CD4-positive, alpha-beta T cell (primary cell): ENCODE measurements at regions of chr9 and their contacts with region 1.

Region 1: DNA sequence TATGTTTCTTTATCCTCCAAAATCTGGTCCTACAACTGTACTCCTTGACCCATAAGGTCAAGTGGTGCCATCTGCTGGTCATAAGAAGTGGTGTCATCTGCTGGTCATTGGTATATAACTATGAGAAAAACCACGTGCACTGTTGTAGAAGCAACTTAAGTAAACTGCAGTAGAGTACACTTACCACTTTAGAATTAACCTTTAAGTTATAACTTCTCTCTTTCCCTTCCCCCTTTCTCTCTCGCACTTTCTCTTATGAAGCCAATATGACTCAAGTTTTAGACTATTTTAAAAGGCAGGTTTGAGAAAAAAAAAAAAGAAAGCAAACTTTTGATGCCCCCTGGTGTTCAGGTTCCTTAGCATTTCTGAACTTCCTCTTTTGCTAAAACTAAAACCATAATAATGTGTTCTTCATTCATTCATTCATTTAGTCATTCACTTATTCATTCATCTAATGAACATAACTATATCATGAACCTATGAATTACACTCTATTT is 12.8 kb upstream of the MTAP start:
- DNase-seq: peak in 11 of 14 experiments; percentile 17 to 88 (median 44)
- ATAC-seq: peak; percentile 97
- H3K4me3 ChIP-seq: peak overlapping the region; percentile 29
- H3K4me3 Mint-ChIP-seq: peak overlapping the region; percentile 59
- H3K27ac ChIP-seq: no peak overlapping the region
- H3K27ac Mint-ChIP-seq: no peak overlapping the region
- H3K4me1 ChIP-seq: no peaks in the 10 kb centered on the region
- H3K4me1 Mint-ChIP-seq: no peaks in the 10 kb centered on the region
- H3K27me3 ChIP-seq: peaks cover 0 to 12% of the 10 kb centered on the region in 2 experiments
- H3K27me3 Mint-ChIP-seq: peaks cover 4% of the 10 kb centered on the region
- CTCF ChIP-seq: peak; percentile 99

Region 2: DNA sequence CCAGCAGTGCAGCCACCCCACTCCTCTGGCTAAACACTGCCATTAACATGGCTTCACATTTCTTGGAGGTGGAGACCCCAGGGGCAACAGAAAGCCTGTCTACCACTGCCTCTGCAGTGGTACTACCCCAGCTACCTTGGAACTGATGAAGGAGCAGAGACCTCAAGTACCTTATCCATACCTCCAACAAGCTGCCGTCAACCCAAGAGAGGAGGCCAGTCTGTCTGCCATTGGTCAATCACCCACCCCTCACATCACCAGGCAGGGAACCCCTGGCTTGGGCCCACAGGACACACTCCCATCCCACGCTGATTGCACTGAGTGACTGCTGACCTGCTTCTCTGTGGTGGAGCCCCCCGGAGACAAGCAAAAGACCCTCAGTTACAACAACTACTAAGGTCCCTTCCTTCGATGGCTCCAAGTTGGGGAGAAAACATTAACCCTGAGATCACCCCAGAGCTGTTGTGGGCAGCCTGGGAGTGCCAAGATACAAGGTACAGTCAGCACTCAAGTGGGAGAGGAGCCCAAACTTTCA is 555.4 kb before region 1 on chr9:
- CTCF ChIA-PET with region 1: no interaction called
- POLR2A ChIA-PET with region 1: no interaction called
- intact Hi-C with region 1: loop called (anchors 1 to 5 kb)
- DNase-seq: no peak
- ATAC-seq: no peak
- H3K4me3 ChIP-seq: no peak overlapping the region
- H3K4me3 Mint-ChIP-seq: no peak overlapping the region
- H3K27ac ChIP-seq: no peak overlapping the region
- H3K27ac Mint-ChIP-seq: no peak overlapping the region
- H3K4me1 ChIP-seq: no peaks in the 10 kb centered on the region
- H3K4me1 Mint-ChIP-seq: peaks cover 20% of the 10 kb centered on the region
- H3K27me3 ChIP-seq: no peaks in the 10 kb centered on the region
- H3K27me3 Mint-ChIP-seq: no peaks in the 10 kb centered on the region
- CTCF ChIP-seq: no peak

Region 3: DNA sequence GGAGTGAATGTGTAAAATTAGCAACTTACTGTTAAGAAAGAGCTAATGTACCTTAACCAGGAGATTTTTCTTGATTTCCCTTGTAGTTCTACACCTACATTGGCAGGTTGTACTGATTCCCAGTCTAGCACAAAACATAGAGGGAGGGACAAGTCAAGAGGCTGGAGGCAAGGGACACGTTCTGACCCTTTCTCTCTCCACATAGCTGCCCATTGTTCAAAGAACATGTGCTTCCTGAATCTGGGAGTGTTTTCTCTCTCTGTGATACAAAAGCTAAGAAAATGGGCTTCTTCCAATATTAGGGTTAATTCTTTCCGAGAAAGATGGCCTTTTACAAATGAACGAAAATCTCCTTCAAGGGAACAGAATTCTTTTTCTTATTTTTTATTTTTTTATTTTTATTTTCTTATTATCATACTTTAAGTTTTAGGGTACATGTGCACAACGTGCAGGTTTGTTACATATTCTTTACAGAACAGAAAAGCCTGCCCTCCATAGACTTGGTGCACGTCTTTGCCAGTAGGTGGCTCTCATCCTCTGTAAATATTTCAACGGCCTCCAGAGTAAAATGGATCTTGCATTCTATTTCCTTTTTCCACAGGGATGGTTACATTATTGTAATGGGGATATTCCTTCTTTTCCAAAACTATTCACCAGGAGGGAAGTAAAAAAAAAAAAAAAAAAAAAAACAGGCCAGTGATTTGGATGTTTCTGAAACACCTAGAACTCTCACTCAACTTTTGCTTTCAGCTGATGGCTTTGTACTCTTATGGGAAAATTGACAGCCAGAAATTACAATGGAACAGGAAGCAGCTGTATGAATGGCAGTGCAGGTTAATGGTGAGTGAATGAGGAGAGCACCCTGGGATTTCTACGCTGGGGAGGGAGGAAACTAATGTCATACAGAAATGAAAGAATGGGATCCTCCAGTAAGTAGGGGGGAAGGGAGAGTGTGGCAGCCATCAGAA is 471.3 kb before region 1 on chr9:
- CTCF ChIA-PET with region 1: no interaction called
- POLR2A ChIA-PET with region 1: no interaction called
- intact Hi-C with region 1: loop called (anchors 2 to 5 kb)
- DNase-seq: peak in 10 of 14 experiments; percentile 3 to 66 (median 14)
- ATAC-seq: peak; percentile 78
- H3K4me3 ChIP-seq: no peak overlapping the region
- H3K4me3 Mint-ChIP-seq: no peak overlapping the region
- H3K27ac ChIP-seq: no peak overlapping the region
- H3K27ac Mint-ChIP-seq: no peak overlapping the region
- H3K4me1 ChIP-seq: no peaks in the 10 kb centered on the region
- H3K4me1 Mint-ChIP-seq: peaks cover 10% of the 10 kb centered on the region
- H3K27me3 ChIP-seq: no peaks in the 10 kb centered on the region
- H3K27me3 Mint-ChIP-seq: no peaks in the 10 kb centered on the region
- CTCF ChIP-seq: peak; percentile 75

Region 4: GRCh38 chr9:21465859-21466518 is 323.6 kb before region 1 on chr9:
- CTCF ChIA-PET with region 1: no interaction called
- POLR2A ChIA-PET with region 1: interaction called, 8 read pairs
- intact Hi-C with region 1: loop called (anchors 1 kb)
- DNase-seq: peak in 3 of 14 experiments; percentile 70 to 75 (median 74)
- ATAC-seq: peak; percentile 82
- H3K4me3 ChIP-seq: no peak overlapping the region
- H3K4me3 Mint-ChIP-seq: no peak overlapping the region
- H3K27ac ChIP-seq: no peak overlapping the region
- H3K27ac Mint-ChIP-seq: no peak overlapping the region
- H3K4me1 ChIP-seq: no peaks in the 10 kb centered on the region
- H3K4me1 Mint-ChIP-seq: no peaks in the 10 kb centered on the region
- H3K27me3 ChIP-seq: no peaks in the 10 kb centered on the region
- H3K27me3 Mint-ChIP-seq: peaks cover 15% of the 10 kb centered on the region
- CTCF ChIP-seq: peak; percentile 78

Region 5: GRCh38 chr9:21585756-21586752 is 203.5 kb before region 1 on chr9:
- CTCF ChIA-PET with region 1: no interaction called
- POLR2A ChIA-PET with region 1: no interaction called
- intact Hi-C with region 1: loop called in 1 of 2 experiments (anchors 10 kb)
- DNase-seq: no peak
- ATAC-seq: no peak
- H3K4me3 ChIP-seq: no peak overlapping the region
- H3K4me3 Mint-ChIP-seq: no peak overlapping the region
- H3K27ac ChIP-seq: no peak overlapping the region
- H3K27ac Mint-ChIP-seq: no peak overlapping the region
- H3K4me1 ChIP-seq: no peaks in the 10 kb centered on the region
- H3K4me1 Mint-ChIP-seq: peaks cover 5% of the 10 kb centered on the region
- H3K27me3 ChIP-seq: no peaks in the 10 kb centered on the region
- H3K27me3 Mint-ChIP-seq: no peaks in the 10 kb centered on the region
- CTCF ChIP-seq: no peak